ENCODE measurements at regions of chr2 and their contacts with region 1.

Region 1: DNA sequence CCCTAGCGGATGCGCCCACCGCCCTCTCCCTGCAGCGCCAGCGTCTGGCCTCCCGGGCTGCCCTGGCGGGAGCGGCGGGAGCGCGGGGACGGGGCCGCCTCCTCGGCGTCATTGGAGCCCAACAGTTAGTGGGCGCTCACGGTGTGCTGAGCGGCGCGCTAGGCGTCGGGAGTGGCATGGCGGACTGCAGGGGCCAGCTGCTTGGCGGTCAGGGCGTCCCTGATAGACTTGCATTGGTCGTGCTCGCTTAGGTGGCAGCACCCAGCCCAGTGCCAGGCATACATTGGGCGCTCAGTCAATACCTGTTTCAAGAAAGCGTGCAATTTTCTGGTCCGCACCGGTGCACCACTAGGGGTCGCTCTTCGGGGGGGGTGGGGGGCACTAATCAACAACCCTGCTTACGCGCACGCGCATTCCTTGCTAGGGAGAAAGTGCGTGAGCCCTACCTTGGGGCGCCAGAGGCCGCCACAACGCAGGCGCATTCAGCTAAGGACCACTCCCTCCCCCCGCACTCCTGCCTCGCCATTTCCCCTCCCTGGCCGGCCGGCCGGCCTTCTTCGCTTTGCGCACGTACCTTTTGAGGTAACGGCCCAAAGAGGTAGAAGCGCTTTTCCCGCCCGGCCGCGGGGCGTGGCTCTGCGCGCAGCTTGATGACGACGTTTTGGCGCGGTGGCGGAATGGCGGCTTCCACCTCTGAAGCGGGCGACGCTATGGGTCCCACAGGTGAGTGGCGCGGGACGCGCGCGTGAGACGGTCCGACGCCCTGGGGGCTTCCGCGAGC is 411 bp upstream of the MZT2A start:
- DNase-seq: peak; percentile 99
- H3K4me3 ChIP-seq: peak overlapping the region; percentile 83
- H3K27ac ChIP-seq: peak overlapping the region; percentile 83
- H3K4me1 ChIP-seq: peaks cover 30% of the 10 kb centered on the region
- CTCF ChIP-seq: peak; percentile 86

Region 2: DNA sequence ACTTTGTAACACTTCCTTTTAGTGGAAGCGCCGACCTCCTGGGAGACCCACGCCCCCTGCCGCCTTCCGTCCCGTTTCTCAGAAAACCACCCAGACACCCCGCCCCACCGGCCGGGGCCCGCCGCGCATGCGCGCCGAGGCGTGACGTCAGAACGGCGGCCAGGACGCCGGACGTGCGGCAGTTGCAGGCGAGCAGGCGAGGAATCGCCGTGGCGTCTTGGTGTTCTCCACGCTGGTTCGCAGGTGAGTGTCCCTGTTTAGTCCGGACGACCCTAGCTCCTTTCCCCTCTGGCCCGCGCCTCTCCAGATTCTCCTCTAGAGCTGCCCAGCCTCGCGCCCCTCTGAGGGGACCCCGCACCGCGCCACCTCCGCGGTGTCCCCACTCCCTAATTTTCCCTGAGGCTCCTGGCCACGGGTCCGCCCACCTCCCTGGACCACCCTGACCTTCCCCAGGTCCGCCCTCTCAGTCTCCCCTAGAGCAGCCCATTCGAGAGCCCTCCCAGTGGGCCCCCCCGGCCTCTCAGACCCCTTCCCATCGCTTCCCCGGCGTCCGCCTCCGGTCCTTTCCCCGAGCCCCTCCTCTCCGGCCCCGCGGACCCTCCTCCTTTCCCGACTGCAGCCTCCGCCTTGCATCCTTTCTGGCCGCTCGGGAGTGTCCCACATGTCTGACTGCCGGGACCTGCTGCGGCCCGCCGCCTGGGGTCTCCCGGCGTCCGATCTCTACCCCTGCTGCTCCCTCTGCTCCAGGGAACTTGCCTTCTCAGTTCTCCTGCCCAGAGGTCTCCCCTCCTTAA is 387.3 kb before region 1 on chr2 and contains the start of gene PLEKHB2:
- CTCF ChIA-PET with region 1: no interaction called
- POLR2A ChIA-PET with region 1: no interaction called
- intact Hi-C with region 1: loop called (anchors 5 kb)
- DNase-seq: peak; percentile 92
- H3K4me3 ChIP-seq: peak within 1 kb of the TSS; percentile 97
- H3K27ac ChIP-seq: peak within 1 kb of the TSS; percentile 80
- H3K4me1 ChIP-seq: peaks cover 21% of the 10 kb centered on the region
- CTCF ChIP-seq: 0 out of 2 replicates have a peak, but pooled peaks have one; percentile 51
- total RNA-seq, gene PLEKHB2: 23.4 and 28.3 TPM in 2 replicates

Region 3: DNA sequence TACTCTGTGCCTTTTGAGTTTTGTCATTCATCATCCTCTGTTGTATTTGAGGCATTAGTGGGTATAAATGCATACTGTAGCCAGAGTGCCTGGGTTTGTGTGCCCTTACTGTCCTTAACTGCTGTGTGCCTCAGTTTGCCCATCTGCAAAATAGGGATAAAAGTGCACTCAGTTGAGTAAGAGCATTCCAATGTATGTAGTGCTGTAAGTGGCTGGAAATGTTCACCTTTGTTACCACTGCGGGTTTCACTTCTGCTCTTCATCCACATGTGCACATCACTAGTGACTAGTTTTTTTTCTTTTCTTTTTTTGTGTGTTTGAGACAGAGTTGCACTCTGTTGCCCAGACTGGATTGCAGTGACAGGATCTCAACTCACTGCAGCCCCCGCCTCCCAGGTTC is 347.6 kb before region 1 on chr2:
- CTCF ChIA-PET with region 1: interaction called, 3 read pairs
- POLR2A ChIA-PET with region 1: no interaction called
- intact Hi-C with region 1: loop called (anchors 5 kb)
- DNase-seq: peak; percentile 79
- H3K4me3 ChIP-seq: peak overlapping the region; percentile 25
- H3K27ac ChIP-seq: peak overlapping the region; percentile 89
- H3K4me1 ChIP-seq: peaks cover 44% of the 10 kb centered on the region
- CTCF ChIP-seq: no peak

Region 4: DNA sequence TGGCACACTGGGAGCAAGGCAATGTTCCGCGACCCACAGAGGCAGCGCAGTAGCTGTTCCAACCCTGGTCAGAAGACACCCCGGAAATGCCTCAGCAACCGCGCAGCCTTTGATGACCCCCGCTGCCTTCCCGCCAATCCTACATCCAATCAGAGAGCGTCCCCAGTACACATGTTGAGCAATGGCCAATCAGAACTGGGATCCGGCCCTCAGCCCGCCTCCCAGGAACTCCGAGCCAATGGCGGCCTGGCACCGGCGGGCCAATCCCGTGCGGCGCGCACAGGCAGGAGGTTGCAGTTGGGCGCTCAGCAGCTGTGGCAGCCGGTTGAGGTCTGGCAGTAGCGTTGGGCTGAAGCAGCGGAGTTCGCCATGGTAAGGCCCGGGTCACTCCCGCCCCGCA is 16.8 kb before region 1 on chr2 and contains the start of gene TUBA3D:
- CTCF ChIA-PET with region 1: no interaction called
- POLR2A ChIA-PET with region 1: no interaction called
- intact Hi-C with region 1: no loop called
- DNase-seq: no peak
- H3K4me3 ChIP-seq: no peak within 1 kb of the TSS
- H3K27ac ChIP-seq: no peak within 1 kb of the TSS
- H3K4me1 ChIP-seq: no peaks in the 10 kb centered on the region
- CTCF ChIP-seq: no peak
- total RNA-seq, gene TUBA3D: not detected in 2 replicates

Region 5: DNA sequence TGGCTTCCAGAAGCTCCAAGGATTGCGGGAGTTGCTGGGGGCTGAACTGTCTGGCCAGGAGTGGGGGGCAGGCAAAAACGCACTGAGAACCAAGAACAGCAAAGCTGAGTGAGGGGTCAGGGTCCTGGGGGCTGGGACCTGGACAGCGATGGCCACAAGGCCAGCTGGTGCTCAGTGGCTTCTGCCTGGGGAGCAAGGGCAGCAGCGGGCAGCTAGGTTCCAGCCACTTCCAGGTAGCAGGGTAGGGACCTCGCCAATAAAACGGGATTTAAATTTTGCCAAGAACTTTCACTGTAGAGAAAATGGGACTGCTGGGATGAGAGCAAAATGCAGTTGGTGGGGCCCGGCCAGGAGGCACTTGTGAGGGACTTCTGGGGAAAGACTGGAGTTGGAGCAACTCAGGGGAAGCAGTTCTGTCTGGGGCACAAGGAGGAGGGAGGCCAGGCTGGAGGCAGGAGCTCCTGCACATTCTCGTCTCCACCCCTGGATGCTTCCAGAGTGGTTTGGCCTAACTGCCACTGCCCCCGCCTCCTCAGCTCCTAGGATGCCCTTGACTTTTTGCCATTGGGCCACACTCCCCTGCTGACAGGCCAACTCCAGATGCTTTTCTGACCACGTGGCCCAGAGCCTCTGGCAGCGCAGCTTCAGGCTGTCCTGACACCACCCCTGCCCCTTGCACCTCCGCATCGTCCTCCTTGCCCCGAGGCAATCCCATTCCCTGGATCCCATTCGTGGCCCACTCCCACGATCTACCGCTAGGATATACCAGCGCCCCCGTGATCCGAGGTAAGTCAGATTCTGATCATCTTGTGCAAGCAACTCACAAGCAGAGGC is 29.6 kb after region 1 on chr2:
- CTCF ChIA-PET with region 1: no interaction called
- POLR2A ChIA-PET with region 1: interaction called, 3 read pairs
- intact Hi-C with region 1: loop called (anchors 2 kb)
- DNase-seq: no peak
- H3K4me3 ChIP-seq: no peak overlapping the region
- H3K27ac ChIP-seq: no peak overlapping the region
- H3K4me1 ChIP-seq: peaks cover 11% of the 10 kb centered on the region
- CTCF ChIP-seq: no peak

Region 6: DNA sequence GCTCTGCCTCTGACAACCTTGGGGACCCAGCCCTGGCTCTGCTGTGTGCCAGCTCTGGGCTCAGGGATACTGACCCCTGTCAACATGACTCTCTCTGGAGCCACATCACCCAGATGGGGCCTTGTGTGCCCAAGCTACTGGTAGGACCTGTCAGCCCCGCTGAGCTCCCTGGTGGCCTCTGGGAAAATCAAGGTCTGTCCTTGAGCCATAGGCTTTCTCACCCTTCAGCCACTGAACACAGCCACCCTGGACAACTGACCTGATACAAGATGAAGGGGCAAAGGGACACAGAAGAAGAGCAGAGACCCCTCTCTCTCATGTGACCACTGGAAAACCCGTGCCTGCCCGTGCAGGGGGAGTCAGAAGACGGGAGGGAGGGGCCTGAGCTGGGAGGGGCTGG is 42.9 kb after region 1 on chr2:
- CTCF ChIA-PET with region 1: no interaction called
- POLR2A ChIA-PET with region 1: no interaction called
- intact Hi-C with region 1: no loop called
- DNase-seq: no peak
- H3K4me3 ChIP-seq: no peak overlapping the region
- H3K27ac ChIP-seq: no peak overlapping the region
- H3K4me1 ChIP-seq: no peaks in the 10 kb centered on the region
- CTCF ChIP-seq: no peak

Region 7: GRCh38 chr2:131584940-131585339 is 92.3 kb after region 1 on chr2:
- CTCF ChIA-PET with region 1: no interaction called
- POLR2A ChIA-PET with region 1: no interaction called
- intact Hi-C with region 1: loop called (anchors 2 kb)
- DNase-seq: peak; percentile 91
- H3K4me3 ChIP-seq: peak overlapping the region; percentile 21
- H3K27ac ChIP-seq: peak overlapping the region; percentile 87
- H3K4me1 ChIP-seq: peaks cover 100% of the 10 kb centered on the region
- CTCF ChIP-seq: no peak

Measured in OCI-LY7 (cell line).